Activated T-helper 1 cell treated with anti-CD3 and anti-CD28 coated beads, Interleukin-12 subunit alpha, Interleukin-12 subunit beta, Interleukin-2, Interleukin-4 antibody, amounts not matched to agents 30 ng/mL and 10 ng/mL and 1 ng/mL, durations not matched to agents 14 hours and 24 hours and 36 hours (primary cell): ENCODE measurements at regions of chr2 and their contacts with region 1.

Region 1: DNA sequence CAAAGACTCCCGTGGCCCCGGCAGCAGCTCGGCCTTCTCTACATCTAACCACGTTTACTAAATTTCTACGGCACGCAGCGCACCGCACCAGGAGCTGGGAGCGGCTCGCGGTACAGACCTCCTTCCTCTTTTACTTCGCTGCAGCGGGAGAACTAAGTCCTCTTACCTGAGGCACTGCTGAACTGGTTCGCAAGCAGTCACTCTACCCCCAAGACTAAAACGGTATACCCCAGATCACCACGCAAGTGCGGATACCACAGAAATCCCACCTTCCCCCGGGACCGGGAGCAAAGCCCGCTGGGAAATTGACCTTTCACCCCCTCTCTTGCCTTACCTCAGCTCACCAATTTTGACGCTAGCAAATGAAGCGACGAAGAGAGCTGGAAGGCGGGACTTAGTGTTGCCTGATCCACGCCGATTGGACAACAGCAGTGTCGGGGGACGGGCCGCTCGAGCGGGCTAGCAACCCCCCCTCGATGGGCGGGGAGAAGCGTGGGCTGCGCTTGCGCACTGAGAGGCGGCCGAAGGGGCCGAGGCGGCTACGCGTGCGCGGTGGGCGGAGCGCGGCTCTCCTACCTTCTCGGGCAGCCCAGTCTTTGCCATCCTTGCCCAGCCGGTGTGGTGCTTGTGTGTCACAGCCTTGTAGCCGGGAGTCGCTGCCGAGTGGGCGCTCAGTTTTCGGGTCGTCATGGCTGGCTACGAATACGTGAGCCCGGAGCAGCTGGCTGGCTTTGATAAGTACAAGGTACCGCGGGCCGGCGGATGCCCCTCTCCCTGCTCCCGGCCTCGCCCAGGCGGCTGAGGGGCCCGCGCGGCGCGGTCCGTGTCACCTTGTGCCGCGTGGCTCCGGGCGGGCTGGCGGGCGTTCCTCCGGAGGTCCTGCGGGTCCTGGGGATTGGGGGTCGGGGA is at the start of gene SELENOI:
- DNase-seq: peak; percentile 100
- H3K4me3 Mint-ChIP-seq: peak within 1 kb of the TSS; percentile 99
- H3K27ac Mint-ChIP-seq: peak within 1 kb of the TSS; percentile 98
- H3K4me1 Mint-ChIP-seq: peaks cover 33% of the 10 kb centered on the region
- H3K27me3 Mint-ChIP-seq: no peaks in the 10 kb centered on the region
- total RNA-seq, gene SELENOI: 66.6 and 68.2 TPM in 2 replicates

Region 2: DNA sequence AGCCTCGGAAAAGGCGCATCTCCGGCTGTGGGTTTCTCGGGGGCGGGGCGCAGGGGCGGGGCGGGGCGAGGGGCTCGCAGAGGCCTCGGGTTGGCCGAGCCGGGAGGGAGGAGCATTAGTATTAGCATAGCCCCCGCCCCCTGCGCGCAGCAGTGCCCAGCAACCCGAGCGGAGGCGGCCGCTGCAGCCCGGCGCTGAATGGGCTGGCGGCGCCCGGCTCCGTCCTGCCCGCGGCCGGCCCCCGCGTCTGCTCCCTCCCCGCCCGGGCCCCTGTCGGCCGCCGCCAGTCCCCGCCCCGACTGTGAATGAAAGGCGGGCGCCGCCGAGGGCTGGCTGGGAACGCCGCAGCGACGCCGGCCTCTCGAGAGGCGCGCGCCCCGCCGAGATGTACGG is 1303.9 kb before region 1 on chr2 and contains the start of gene EFR3B:
- intact Hi-C with region 1: loop called (anchors 5 kb)
- DNase-seq: peak; percentile 83
- H3K4me3 Mint-ChIP-seq: peak within 1 kb of the TSS; percentile 81
- H3K27ac Mint-ChIP-seq: no peak within 1 kb of the TSS
- H3K4me1 Mint-ChIP-seq: peaks cover 26% of the 10 kb centered on the region
- H3K27me3 Mint-ChIP-seq: peaks cover 49% of the 10 kb centered on the region
- total RNA-seq, gene EFR3B: 0.21 and 0.22 TPM in 2 replicates

Region 3: GRCh38 chr2:26244309-26245121 is 101.3 kb before region 1 on chr2 and contains the starts of genes HADHA and HADHB:
- intact Hi-C with region 1: loop called (anchors 1 kb)
- DNase-seq: peak; percentile 76
- H3K4me3 Mint-ChIP-seq: peak within 1 kb of the TSS; percentile 98
- H3K27ac Mint-ChIP-seq: peak within 1 kb of the TSS; percentile 96
- H3K4me1 Mint-ChIP-seq: peaks cover 44% of the 10 kb centered on the region
- H3K27me3 Mint-ChIP-seq: peaks cover 8% of the 10 kb centered on the region
- total RNA-seq, gene HADHA: 96.8 and 99.9 TPM in 2 replicates
- total RNA-seq, gene HADHB: 78.8 and 78.9 TPM in 2 replicates

Region 4: DNA sequence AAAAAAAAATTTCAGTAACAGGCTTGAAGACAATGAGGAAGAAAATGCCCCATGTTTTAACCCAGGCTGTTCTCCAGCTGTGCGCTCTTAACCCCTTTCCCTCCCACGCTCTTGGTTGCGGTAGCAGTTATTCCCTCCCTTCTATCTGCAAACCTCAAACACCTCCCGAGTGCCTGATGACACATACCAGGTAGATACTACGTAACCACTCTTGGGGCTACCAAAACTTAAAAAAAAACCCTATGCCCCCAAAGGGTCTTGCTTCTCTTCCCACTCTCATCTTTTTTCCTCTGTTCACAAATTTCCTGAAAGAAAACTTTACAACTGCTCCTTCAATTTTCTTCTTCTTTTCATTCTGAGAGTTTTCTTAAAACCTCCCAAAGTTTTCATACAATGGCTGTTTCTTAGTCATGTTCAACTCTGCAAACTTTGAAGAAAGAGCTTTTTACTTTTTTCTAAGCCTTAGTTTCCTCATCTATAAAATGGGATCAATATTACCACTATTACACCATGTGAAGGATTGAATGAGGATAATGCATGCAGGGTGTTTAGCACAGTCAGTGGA is 51.0 kb after region 1 on chr2:
- intact Hi-C with region 1: loop called (anchors 2 kb)
- DNase-seq: peak; percentile 6
- H3K4me3 Mint-ChIP-seq: no peak overlapping the region
- H3K27ac Mint-ChIP-seq: peak overlapping the region; percentile 73
- H3K4me1 Mint-ChIP-seq: peaks cover 30% of the 10 kb centered on the region
- H3K27me3 Mint-ChIP-seq: no peaks in the 10 kb centered on the region

Region 5: DNA sequence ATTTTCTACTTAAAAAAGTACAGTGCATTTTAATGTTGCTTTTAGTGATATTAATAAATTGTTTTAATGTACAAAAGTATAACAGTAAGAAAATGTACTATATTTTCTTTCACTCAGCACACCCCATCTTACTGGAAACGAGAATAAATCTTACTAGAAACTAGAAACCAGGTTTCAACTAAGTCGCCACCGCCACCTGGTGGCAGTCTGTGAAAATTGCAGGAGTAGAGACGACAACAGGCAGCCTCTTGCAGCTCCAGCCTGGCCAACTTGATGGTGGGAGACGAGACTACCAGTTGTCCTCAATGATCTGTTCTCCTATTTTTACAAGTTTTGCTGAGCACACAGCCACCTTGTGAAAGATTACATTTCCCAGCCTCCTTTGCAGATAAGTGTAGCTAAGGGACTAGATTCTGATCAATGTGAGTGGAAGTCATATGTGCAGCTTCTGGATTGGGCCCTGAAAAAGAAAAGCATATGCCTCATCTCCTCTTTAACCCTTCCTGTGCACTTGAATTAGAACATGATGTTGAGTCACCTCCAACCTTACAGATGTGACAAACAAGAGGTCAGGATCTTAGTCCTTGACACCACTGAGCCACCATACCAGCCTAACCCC is 123.4 kb after region 1 on chr2:
- intact Hi-C with region 1: loop called (anchors 1 kb)
- DNase-seq: peak; percentile 37
- H3K4me3 Mint-ChIP-seq: no peak overlapping the region
- H3K27ac Mint-ChIP-seq: no peak overlapping the region
- H3K4me1 Mint-ChIP-seq: no peaks in the 10 kb centered on the region
- H3K27me3 Mint-ChIP-seq: no peaks in the 10 kb centered on the region

Region 6: DNA sequence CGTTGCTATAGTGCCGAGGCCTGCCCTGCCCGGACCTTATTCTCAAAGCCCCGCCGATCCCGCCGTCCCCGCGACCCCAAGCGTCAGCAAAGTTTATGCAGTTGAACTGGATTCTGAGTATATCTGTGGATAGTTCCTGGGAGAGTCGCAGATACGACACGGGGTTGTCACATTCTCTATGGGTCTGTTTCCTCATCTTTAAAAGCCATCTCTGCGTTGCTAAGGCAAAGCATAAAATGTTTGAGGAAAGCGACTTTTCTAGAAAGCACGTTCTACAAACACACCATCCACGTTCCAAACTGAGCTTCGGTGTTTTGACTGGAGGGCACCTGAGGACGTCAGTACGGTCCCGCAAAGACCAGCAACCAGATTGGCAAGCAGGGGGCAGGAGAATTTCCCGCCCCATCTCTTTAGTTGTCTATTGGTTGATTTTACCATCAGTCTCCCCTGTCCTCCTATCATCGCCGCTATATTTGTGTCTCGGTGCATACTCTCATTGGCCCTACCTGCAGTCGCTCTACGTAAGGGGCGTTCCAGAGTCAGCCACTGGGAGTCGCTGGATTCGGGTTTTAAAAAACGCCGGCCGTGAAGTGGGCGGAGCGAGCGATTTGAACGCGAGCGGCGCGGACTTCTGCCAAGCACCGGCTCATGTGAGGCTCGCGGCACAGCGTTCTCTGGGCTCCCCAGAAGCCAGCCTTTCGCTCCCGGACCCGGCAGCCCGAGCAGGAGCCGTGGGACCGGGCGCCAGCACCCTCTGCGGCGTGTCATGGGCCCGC is 439.8 kb after region 1 on chr2 and contains the start of gene CENPA:
- intact Hi-C with region 1: loop called (anchors 5 kb)
- DNase-seq: peak; percentile 94
- H3K4me3 Mint-ChIP-seq: peak within 1 kb of the TSS; percentile 96
- H3K27ac Mint-ChIP-seq: peak within 1 kb of the TSS; percentile 89
- H3K4me1 Mint-ChIP-seq: peaks cover 33% of the 10 kb centered on the region
- H3K27me3 Mint-ChIP-seq: no peaks in the 10 kb centered on the region
- total RNA-seq, gene CENPA: 16.6 and 19.7 TPM in 2 replicates

Region 7: GRCh38 chr2:27050281-27050995 is 704.6 kb after region 1 on chr2:
- intact Hi-C with region 1: loop called (anchors 1 kb)
- DNase-seq: peak; percentile 88
- H3K4me3 Mint-ChIP-seq: peak overlapping the region; percentile 96
- H3K27ac Mint-ChIP-seq: peak overlapping the region; percentile 99
- H3K4me1 Mint-ChIP-seq: peaks cover 36% of the 10 kb centered on the region
- H3K27me3 Mint-ChIP-seq: peaks cover 7% of the 10 kb centered on the region